H1 (cell line): ENCODE measurements at regions of chr9 and their contacts with region 1.

Region 1: DNA sequence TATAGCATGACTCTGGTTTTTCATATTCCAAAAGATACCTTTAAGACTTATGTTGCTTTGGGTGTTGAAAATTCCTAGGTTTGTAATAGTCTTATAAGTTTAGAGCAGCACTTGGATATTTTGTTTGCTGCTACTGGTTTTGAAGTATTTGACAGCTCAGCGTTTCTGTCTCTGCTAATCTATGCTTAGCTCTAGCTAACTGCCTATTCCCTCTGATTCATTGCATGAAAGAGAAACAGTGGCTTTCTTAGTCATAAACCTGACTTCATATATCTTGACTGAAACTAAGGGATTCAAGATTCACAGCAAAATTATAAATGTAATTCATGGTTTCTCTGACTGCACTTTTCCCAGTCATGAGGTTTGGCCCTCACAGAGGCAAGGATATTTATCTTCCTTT is 35.6 kb upstream of the ANXA1 start:
- DNase-seq: no peak
- H3K4me3 ChIP-seq: no peak overlapping the region
- H3K27ac ChIP-seq: no peak overlapping the region
- H3K4me1 ChIP-seq: no peaks in the 10 kb centered on the region
- H3K27me3 ChIP-seq: no peaks in the 10 kb centered on the region
- CTCF ChIP-seq: no peak
- EP300 ChIP-seq: no peak
- POLR2A ChIP-seq: no peak
- RAD21 ChIP-seq: no peak

Region 2: DNA sequence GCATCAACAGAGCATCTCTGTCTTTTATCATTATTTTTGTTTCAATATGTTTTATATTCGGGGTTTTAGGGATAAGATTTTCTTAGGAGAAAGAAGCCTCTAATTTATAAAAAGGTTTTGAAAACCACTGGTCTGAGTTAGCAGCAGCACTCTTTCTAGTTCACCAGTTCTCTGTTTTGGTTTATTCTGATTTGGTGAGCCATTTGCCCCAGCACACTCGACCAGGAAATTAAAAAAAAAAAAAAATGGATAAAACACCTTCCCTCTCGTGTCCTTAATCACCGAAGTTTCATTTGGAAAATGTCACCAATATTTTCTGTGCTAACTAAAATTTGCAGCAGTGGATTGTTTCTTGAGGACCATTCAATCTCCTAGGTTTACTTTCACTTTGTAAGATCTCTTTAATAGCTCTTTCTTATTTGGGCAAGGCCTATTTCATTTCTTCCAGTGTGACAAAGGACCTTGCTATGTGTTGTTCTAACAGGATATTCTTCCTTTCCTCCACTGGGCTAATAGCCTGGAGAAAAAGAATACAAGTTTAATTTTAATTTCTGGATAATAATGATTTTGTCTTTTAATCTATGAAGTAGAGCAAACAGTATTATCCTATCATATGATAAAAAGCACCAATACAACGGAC is 22.2 kb before region 1 on chr9:
- CTCF ChIA-PET with region 1: no interaction called
- POLR2A ChIA-PET with region 1: no interaction called
- DNase-seq: no peak
- H3K4me3 ChIP-seq: no peak overlapping the region
- H3K27ac ChIP-seq: no peak overlapping the region
- H3K4me1 ChIP-seq: no peaks in the 10 kb centered on the region; a peak in 1 of 7 replicates
- H3K27me3 ChIP-seq: no peaks in the 10 kb centered on the region
- CTCF ChIP-seq: no peak
- EP300 ChIP-seq: no peak
- POLR2A ChIP-seq: no peak
- RAD21 ChIP-seq: no peak

Region 3: GRCh38 chr9:73104342-73104741 is 11.7 kb before region 1 on chr9:
- CTCF ChIA-PET with region 1: interaction called, 15 read pairs
- POLR2A ChIA-PET with region 1: no interaction called
- DNase-seq: no peak
- H3K4me3 ChIP-seq: no peak overlapping the region
- H3K27ac ChIP-seq: no peak overlapping the region
- H3K4me1 ChIP-seq: no peaks in the 10 kb centered on the region
- H3K27me3 ChIP-seq: no peaks in the 10 kb centered on the region
- CTCF ChIP-seq: no peak
- EP300 ChIP-seq: no peak
- POLR2A ChIP-seq: no peak
- RAD21 ChIP-seq: no peak

Region 4: GRCh38 chr9:73176450-73176875 is 60.4 kb after region 1 on chr9:
- CTCF ChIA-PET with region 1: interaction called, 28 read pairs
- POLR2A ChIA-PET with region 1: no interaction called
- DNase-seq: no peak
- H3K4me3 ChIP-seq: no peak overlapping the region
- H3K27ac ChIP-seq: no peak overlapping the region
- H3K4me1 ChIP-seq: no peaks in the 10 kb centered on the region
- H3K27me3 ChIP-seq: no peaks in the 10 kb centered on the region
- CTCF ChIP-seq: no peak
- EP300 ChIP-seq: no peak
- POLR2A ChIP-seq: no peak
- RAD21 ChIP-seq: no peak